Activated B cell treated with CpG ODN at 0.5 μM for 24 hours (primary cell): ENCODE measurements at regions of chr1 and their contacts with region 1.

Region 1: GRCh38 chr1:111030590-111030989 is 66.9 kb upstream of the LRIF1 start:
- DNase-seq: no peak
- ATAC-seq: peak; percentile 70
- H3K4me3 Mint-ChIP-seq: no peak overlapping the region
- H3K27ac Mint-ChIP-seq: no peak overlapping the region
- H3K4me1 Mint-ChIP-seq: peaks cover 8% of the 10 kb centered on the region
- H3K27me3 Mint-ChIP-seq: no peaks in the 10 kb centered on the region
- CTCF ChIP-seq: peak; percentile 53

Region 2: GRCh38 chr1:110262846-110263631 is 767.6 kb before region 1 on chr1:
- CTCF ChIA-PET with region 1: no interaction called
- POLR2A ChIA-PET with region 1: no interaction called
- intact Hi-C with region 1: no loop called
- DNase-seq: no peak
- ATAC-seq: no peak
- H3K4me3 Mint-ChIP-seq: no peak overlapping the region
- H3K27ac Mint-ChIP-seq: no peak overlapping the region
- H3K4me1 Mint-ChIP-seq: peaks cover 7% of the 10 kb centered on the region
- H3K27me3 Mint-ChIP-seq: no peaks in the 10 kb centered on the region
- CTCF ChIP-seq: no peak

Region 3: GRCh38 chr1:110746579-110747160 is 283.9 kb before region 1 on chr1:
- CTCF ChIA-PET with region 1: no interaction called
- POLR2A ChIA-PET with region 1: no interaction called
- intact Hi-C with region 1: no loop called
- DNase-seq: no peak
- ATAC-seq: no peak
- H3K4me3 Mint-ChIP-seq: no peak overlapping the region
- H3K27ac Mint-ChIP-seq: peak overlapping the region; percentile 47
- H3K4me1 Mint-ChIP-seq: no peaks in the 10 kb centered on the region
- H3K27me3 Mint-ChIP-seq: peaks cover 36% of the 10 kb centered on the region
- CTCF ChIP-seq: no peak

Region 4: GRCh38 chr1:111045033-111045722 is 14.6 kb after region 1 on chr1:
- CTCF ChIA-PET with region 1: interaction called, 19 read pairs
- POLR2A ChIA-PET with region 1: no interaction called
- intact Hi-C with region 1: no loop called
- DNase-seq: no peak
- ATAC-seq: no peak
- H3K4me3 Mint-ChIP-seq: no peak overlapping the region
- H3K27ac Mint-ChIP-seq: no peak overlapping the region
- H3K4me1 Mint-ChIP-seq: no peaks in the 10 kb centered on the region
- H3K27me3 Mint-ChIP-seq: no peaks in the 10 kb centered on the region
- CTCF ChIP-seq: no peak

Region 5: DNA sequence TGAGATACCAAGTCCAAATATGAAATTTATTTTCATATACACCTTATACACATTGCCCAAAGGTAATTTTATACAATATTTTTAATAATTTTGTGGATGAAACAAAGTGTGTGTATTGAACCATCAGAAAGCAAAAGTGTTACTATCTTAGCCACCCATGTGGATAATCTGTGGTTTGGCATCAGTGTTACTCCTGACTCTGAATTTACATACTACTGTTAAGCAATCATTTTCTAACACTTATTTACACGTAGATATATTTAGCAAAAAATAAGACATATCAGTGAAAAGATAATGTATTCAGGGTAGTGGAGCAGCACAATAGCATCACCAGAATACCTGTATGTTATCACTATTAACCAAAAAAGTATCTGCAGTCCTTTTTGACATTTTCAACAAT is 146.1 kb after region 1 on chr1:
- CTCF ChIA-PET with region 1: interaction called, 4 read pairs
- POLR2A ChIA-PET with region 1: no interaction called
- intact Hi-C with region 1: loop called (anchors 5 kb)
- DNase-seq: no peak
- ATAC-seq: peak; percentile 64
- H3K4me3 Mint-ChIP-seq: no peak overlapping the region
- H3K27ac Mint-ChIP-seq: peak overlapping the region; percentile 69
- H3K4me1 Mint-ChIP-seq: peaks cover 64% of the 10 kb centered on the region
- H3K27me3 Mint-ChIP-seq: no peaks in the 10 kb centered on the region
- CTCF ChIP-seq: no peak

Region 6: DNA sequence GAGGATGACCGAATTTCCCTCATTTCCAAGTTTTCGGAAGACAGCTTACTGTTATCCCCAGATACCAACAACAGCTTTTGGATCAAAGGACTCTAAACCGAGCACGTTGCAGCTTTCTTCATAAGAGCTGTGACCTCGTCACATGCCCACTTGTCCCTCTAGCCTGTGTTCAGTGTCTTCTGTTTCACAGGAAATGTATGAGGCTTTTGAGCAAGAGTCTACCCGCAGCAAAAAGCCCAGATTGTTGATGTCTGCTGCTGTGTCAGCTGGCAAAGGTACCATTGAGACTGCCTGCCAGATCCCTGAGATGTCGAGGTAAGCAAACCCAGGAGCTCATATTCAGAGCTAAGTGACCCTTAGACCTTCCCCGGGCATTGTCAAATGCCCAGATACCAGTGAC is 221.0 kb after region 1 on chr1:
- CTCF ChIA-PET with region 1: no interaction called
- POLR2A ChIA-PET with region 1: no interaction called
- intact Hi-C with region 1: no loop called
- DNase-seq: no peak
- ATAC-seq: no peak
- H3K4me3 Mint-ChIP-seq: no peak overlapping the region
- H3K27ac Mint-ChIP-seq: no peak overlapping the region
- H3K4me1 Mint-ChIP-seq: no peaks in the 10 kb centered on the region
- H3K27me3 Mint-ChIP-seq: peaks cover 7% of the 10 kb centered on the region
- CTCF ChIP-seq: no peak

Region 7: DNA sequence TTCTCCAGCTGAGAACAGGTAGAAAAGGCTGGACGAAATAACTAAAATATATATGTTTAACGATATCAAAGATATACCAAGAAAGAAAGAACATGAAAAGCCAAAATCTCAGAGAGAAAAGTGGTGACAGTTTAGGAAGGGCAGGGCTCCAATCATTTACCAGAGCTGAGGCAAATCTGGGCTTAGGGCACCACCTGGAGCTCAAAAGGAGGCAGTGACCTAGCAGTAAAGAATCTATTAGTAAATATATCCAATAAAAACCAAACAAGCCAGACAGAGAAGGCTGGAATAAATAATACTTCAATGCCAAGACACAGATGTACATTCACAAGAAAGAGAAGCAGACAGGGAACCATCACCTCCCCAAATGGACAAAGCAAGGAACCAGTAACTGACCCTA is 303.6 kb after region 1 on chr1:
- CTCF ChIA-PET with region 1: interaction called, 31 read pairs
- POLR2A ChIA-PET with region 1: no interaction called
- intact Hi-C with region 1: loop called (anchors 1 kb)
- DNase-seq: no peak
- ATAC-seq: peak; percentile 61
- H3K4me3 Mint-ChIP-seq: no peak overlapping the region
- H3K27ac Mint-ChIP-seq: no peak overlapping the region
- H3K4me1 Mint-ChIP-seq: peaks cover 2% of the 10 kb centered on the region
- H3K27me3 Mint-ChIP-seq: no peaks in the 10 kb centered on the region
- CTCF ChIP-seq: no peak

Region 8: DNA sequence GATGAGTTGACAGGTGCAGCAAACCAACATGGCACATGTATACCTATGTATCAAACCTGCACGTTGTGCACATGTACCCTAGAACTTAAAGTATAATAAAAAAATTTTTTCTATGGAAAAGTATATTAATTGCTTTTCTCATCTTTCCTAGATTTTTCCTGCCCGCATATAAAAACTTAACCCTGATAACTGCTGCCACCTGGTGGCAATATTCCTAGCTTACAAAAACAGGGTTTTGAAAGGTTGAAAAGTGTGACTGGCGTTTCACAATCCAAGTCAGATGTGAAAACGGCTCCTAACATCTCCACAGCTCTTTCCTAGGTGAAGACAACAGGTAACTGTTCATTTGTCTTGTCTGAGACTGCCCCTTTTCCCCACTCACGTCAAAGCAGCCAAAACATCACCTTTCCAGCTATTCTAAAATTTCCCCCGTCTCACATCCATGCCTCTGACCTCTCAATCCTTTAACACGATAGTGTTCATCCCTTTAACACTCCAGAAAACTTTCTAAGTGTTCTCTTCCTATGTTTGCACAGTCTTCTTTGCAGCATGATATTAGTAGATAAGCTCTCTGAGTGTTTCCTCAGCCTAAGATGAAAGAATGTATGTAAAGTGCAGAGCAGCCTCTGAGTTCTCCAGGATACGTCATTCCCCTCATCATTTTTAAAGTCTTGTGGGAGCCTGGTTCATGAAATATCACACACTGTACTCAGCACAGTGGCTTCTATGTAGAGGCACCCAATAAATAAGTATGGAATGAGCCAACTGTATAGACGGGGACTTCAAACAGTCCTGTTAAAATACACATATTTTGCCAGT is 369.4 kb after region 1 on chr1:
- CTCF ChIA-PET with region 1: interaction called, 31 read pairs
- POLR2A ChIA-PET with region 1: no interaction called
- intact Hi-C with region 1: loop called (anchors 1 kb)
- DNase-seq: no peak
- ATAC-seq: no peak
- H3K4me3 Mint-ChIP-seq: no peak overlapping the region
- H3K27ac Mint-ChIP-seq: no peak overlapping the region
- H3K4me1 Mint-ChIP-seq: peaks cover 22% of the 10 kb centered on the region
- H3K27me3 Mint-ChIP-seq: no peaks in the 10 kb centered on the region
- CTCF ChIP-seq: peak; percentile 79

Region 9: DNA sequence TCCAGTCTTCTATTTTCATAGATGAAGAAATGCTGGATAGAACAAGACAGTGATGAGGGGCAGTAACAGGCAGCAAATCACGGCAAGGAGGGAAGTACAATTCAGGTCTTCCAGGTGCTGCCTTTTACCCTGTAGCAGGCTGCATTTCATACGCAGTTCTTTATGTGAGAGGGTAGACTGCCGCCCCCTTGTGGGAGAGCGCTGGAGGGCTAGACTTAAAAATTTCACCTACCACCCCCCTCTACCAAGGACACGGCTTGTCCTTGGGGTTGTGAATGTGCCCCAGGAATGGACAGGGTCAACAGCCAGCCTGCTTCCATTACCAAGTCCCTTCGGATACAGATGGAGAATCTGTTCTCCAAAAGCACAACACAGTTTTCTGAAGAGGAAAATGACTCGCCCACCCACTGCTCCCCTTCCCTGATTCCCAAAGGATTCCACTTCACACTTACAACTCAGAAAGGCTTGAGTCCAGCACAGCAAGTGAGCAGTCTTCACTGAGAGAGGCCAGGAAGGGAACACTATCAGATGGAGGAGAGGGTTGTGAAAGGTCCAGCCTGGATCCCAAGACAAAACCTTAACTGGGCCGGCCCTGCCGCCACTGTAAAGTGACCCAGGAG is 411.1 kb after region 1 on chr1:
- CTCF ChIA-PET with region 1: no interaction called
- POLR2A ChIA-PET with region 1: interaction called, 3 read pairs
- intact Hi-C with region 1: loop called (anchors 2 kb)
- DNase-seq: peak; percentile 40
- ATAC-seq: peak; percentile 91
- H3K4me3 Mint-ChIP-seq: no peak overlapping the region
- H3K27ac Mint-ChIP-seq: no peak overlapping the region
- H3K4me1 Mint-ChIP-seq: peaks cover 19% of the 10 kb centered on the region
- H3K27me3 Mint-ChIP-seq: no peaks in the 10 kb centered on the region
- CTCF ChIP-seq: no peak

Region 10: GRCh38 chr1:111563619-111564018 is 533.0 kb after region 1 on chr1:
- CTCF ChIA-PET with region 1: no interaction called
- POLR2A ChIA-PET with region 1: no interaction called
- intact Hi-C with region 1: no loop called
- DNase-seq: no peak
- ATAC-seq: no peak
- H3K4me3 Mint-ChIP-seq: no peak overlapping the region
- H3K27ac Mint-ChIP-seq: no peak overlapping the region
- H3K4me1 Mint-ChIP-seq: no peaks in the 10 kb centered on the region
- H3K27me3 Mint-ChIP-seq: no peaks in the 10 kb centered on the region
- CTCF ChIP-seq: no peak

Region 11: GRCh38 chr1:111769517-111770146 is 739.0 kb after region 1 on chr1:
- CTCF ChIA-PET with region 1: interaction called, 7 read pairs
- POLR2A ChIA-PET with region 1: no interaction called
- intact Hi-C with region 1: loop called (anchors 1 kb)
- DNase-seq: no peak
- ATAC-seq: peak; percentile 58
- H3K4me3 Mint-ChIP-seq: no peak overlapping the region
- H3K27ac Mint-ChIP-seq: no peak overlapping the region
- H3K4me1 Mint-ChIP-seq: no peaks in the 10 kb centered on the region
- H3K27me3 Mint-ChIP-seq: no peaks in the 10 kb centered on the region
- CTCF ChIP-seq: no peak